PC-9 (cell line): ENCODE measurements at regions of chr17 and their contacts with region 1.

Region 1: GRCh38 chr17:700504-701094 is 14.0 kb downstream of the VPS53 start:
- DNase-seq: no peak
- H3K4me3 ChIP-seq: no peak overlapping the region
- H3K27ac ChIP-seq: no peak overlapping the region
- H3K4me1 ChIP-seq: 0 out of 2 replicates have a peak, but pooled peaks cover under 1% of the 10 kb centered on the region
- H3K27me3 ChIP-seq: no peaks in the 10 kb centered on the region
- CTCF ChIP-seq: peak; percentile 91

Region 2: GRCh38 chr17:143782-144281 is 556.8 kb before region 1 on chr17:
- CTCF ChIA-PET with region 1: no interaction called
- POLR2A ChIA-PET with region 1: no interaction called
- intact Hi-C with region 1: loop called (anchors 5 kb)
- DNase-seq: peak; percentile 53 to 94
- H3K4me3 ChIP-seq: no peak overlapping the region
- H3K27ac ChIP-seq: no peak overlapping the region
- H3K4me1 ChIP-seq: no peaks in the 10 kb centered on the region
- H3K27me3 ChIP-seq: no peaks in the 10 kb centered on the region
- CTCF ChIP-seq: peak; percentile 91

Region 3: GRCh38 chr17:622356-622755 is 78.2 kb before region 1 on chr17:
- CTCF ChIA-PET with region 1: no interaction called
- POLR2A ChIA-PET with region 1: no interaction called
- intact Hi-C with region 1: no loop called
- DNase-seq: no peak
- H3K4me3 ChIP-seq: no peak overlapping the region
- H3K27ac ChIP-seq: no peak overlapping the region
- H3K4me1 ChIP-seq: no peaks in the 10 kb centered on the region
- H3K27me3 ChIP-seq: no peaks in the 10 kb centered on the region
- CTCF ChIP-seq: no peak

Region 4: GRCh38 chr17:879549-880442 is 179.2 kb after region 1 on chr17:
- CTCF ChIA-PET with region 1: no interaction called
- POLR2A ChIA-PET with region 1: no interaction called
- intact Hi-C with region 1: no loop called
- DNase-seq: peak; percentile 65 to 89
- H3K4me3 ChIP-seq: no peak overlapping the region
- H3K27ac ChIP-seq: no peak overlapping the region
- H3K4me1 ChIP-seq: peaks cover 11% of the 10 kb centered on the region; the same call in 1 of the 2 replicates
- H3K27me3 ChIP-seq: no peaks in the 10 kb centered on the region
- CTCF ChIP-seq: peak; percentile 44